Natural killer cell (primary cell): ENCODE measurements at regions of chr7 and their contacts with region 1.

Region 1: DNA sequence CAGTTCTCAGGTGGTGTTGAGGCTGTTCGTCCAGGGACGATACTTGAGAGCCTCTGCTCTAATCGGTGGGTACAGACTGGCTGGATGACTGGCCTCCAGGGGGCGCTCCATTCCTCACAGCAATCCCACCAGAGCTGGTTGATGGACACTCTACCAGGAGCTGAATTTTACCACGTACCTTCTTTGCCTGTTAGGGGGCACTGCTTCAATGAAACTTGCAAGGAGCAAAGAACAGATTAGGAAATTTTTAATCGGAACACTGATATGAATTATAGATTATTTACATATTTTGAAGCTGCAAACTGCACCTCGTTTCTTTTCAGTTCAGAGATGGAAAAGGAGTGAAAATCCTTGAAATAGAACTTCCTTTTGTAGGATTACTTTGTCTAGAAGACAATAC is 44.9 kb downstream of the KBTBD2 start:
- DNase-seq: peak; percentile 86 to 94
- ATAC-seq: peak; percentile 100
- H3K4me3 ChIP-seq: no peak overlapping the region
- H3K4me3 Mint-ChIP-seq: no peak overlapping the region
- H3K27ac ChIP-seq: no peak overlapping the region
- H3K27ac Mint-ChIP-seq: peak overlapping the region in 1 of 2 donors; percentile 44
- H3K4me1 ChIP-seq: peaks cover 4% of the 10 kb centered on the region
- H3K4me1 Mint-ChIP-seq: peaks cover 7 to 8% of the 10 kb centered on the region in 2 donors
- H3K27me3 ChIP-seq: peaks cover 2% of the 10 kb centered on the region
- H3K27me3 Mint-ChIP-seq: peaks cover 16 to 27% of the 10 kb centered on the region in 2 donors
- CTCF ChIP-seq: peak; percentile 87

Region 2: DNA sequence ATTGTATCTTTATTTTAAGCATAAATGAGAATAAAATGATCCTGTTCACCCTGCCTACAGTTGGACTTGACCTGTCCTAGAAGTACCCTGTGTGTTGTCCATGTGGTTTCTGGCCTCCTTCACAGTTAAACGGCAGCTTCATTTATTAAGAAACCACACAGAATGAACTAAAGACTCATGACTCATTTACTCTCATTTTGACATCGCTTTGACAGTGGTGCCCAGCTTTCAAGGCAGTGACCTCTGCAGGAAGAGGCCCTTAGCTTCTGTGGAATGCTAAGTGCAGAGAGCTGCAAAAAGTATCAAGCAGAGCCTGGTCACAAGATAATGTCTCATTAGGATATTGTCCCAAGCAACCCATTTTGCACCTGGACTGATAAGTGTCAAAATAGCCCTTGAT is 258.0 kb before region 1 on chr7:
- intact Hi-C with region 1: no loop called
- DNase-seq: no peak
- ATAC-seq: no peak
- H3K4me3 ChIP-seq: no peak overlapping the region
- H3K4me3 Mint-ChIP-seq: no peak overlapping the region
- H3K27ac ChIP-seq: no peak overlapping the region
- H3K27ac Mint-ChIP-seq: peak overlapping the region; percentile 50 to 54
- H3K4me1 ChIP-seq: no peaks in the 10 kb centered on the region
- H3K4me1 Mint-ChIP-seq: no peaks in the 10 kb centered on the region
- H3K27me3 ChIP-seq: no peaks in the 10 kb centered on the region
- H3K27me3 Mint-ChIP-seq: peaks cover 0 to under 1% of the 10 kb centered on the region in 2 donors
- CTCF ChIP-seq: no peak

Region 3: GRCh38 chr7:32761451-32762205 is 85.1 kb before region 1 on chr7:
- intact Hi-C with region 1: no loop called
- DNase-seq: no peak
- ATAC-seq: no peak
- H3K4me3 ChIP-seq: no peak overlapping the region
- H3K4me3 Mint-ChIP-seq: no peak overlapping the region
- H3K27ac ChIP-seq: no peak overlapping the region
- H3K27ac Mint-ChIP-seq: no peak overlapping the region
- H3K4me1 ChIP-seq: peaks cover 6% of the 10 kb centered on the region
- H3K4me1 Mint-ChIP-seq: peaks cover 9 to 11% of the 10 kb centered on the region in 2 donors
- H3K27me3 ChIP-seq: peaks cover 25% of the 10 kb centered on the region
- H3K27me3 Mint-ChIP-seq: peaks cover 26 to 61% of the 10 kb centered on the region in 2 donors
- CTCF ChIP-seq: no peak

Region 4: GRCh38 chr7:32942786-32943653 is 96.3 kb after region 1 on chr7:
- intact Hi-C with region 1: loop called (anchors 1 kb)
- DNase-seq: peak; percentile 61 to 82
- ATAC-seq: peak; percentile 90 to 92 (median 92)
- H3K4me3 ChIP-seq: peak overlapping the region; percentile 66
- H3K4me3 Mint-ChIP-seq: peak overlapping the region; percentile 97
- H3K27ac ChIP-seq: peak overlapping the region; percentile 57
- H3K27ac Mint-ChIP-seq: peak overlapping the region in 1 of 2 donors; percentile 78
- H3K4me1 ChIP-seq: peaks cover 11% of the 10 kb centered on the region
- H3K4me1 Mint-ChIP-seq: peaks cover 11 to 16% of the 10 kb centered on the region in 2 donors
- H3K27me3 ChIP-seq: no peaks in the 10 kb centered on the region
- H3K27me3 Mint-ChIP-seq: peaks cover under 1 to 12% of the 10 kb centered on the region in 2 donors
- CTCF ChIP-seq: peak; percentile 61

Region 5: DNA sequence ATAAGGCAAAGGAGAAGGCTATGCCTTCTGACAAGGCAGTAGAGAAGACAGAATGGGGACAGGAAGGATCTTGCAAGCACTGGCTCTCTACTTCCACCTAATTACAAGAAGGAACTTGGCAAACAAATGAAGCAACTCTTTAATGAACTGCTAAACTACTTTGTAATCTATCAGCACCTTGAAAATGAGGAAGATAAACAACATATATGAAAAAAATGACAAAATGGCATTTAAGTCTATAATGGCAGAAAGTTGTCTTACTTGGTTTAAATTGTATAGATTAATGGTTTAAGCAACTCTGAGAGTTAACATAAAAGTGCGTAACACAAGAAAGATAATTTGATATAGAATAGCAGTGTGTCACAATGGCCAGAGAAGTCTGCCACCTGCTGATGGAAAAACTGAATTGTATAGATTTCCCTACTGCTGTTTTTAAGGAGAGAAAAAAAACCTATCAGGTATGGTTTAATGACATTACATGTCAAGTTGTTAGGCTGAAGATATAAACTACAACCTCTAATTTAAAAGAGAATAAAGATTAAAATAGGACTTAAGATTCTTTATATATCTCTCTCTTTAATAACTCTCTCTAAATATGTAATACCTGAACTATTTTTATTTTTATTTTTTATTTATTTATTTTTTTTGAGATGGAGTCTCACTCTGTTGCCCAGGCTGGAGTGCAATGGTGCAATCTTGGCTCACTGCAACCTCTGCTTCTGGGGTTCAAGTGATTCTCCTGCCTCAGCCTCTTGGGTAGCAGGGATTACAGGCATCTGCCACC is 204.0 kb after region 1 on chr7:
- intact Hi-C with region 1: loop called (anchors 1 kb)
- DNase-seq: peak in 1 of 2 donors; percentile 77
- ATAC-seq: peak; percentile 52 to 68 (median 57)
- H3K4me3 ChIP-seq: no peak overlapping the region
- H3K4me3 Mint-ChIP-seq: no peak overlapping the region
- H3K27ac ChIP-seq: peak overlapping the region; percentile 41
- H3K27ac Mint-ChIP-seq: peak overlapping the region; percentile 46 to 83
- H3K4me1 ChIP-seq: peaks cover 14% of the 10 kb centered on the region
- H3K4me1 Mint-ChIP-seq: peaks cover 31 to 35% of the 10 kb centered on the region in 2 donors
- H3K27me3 ChIP-seq: no peaks in the 10 kb centered on the region
- H3K27me3 Mint-ChIP-seq: no peaks in the 10 kb centered on the region
- CTCF ChIP-seq: peak; percentile 74

Region 6: GRCh38 chr7:33109005-33109757 is 262.5 kb after region 1 on chr7 and contains the start of gene RP9:
- intact Hi-C with region 1: loop called (anchors 2 kb)
- DNase-seq: peak; percentile 74 to 87
- ATAC-seq: peak; percentile 89 to 96 (median 94)
- H3K4me3 ChIP-seq: peak within 1 kb of the TSS; percentile 59
- H3K4me3 Mint-ChIP-seq: peak within 1 kb of the TSS; percentile 91
- H3K27ac ChIP-seq: peak within 1 kb of the TSS; percentile 51
- H3K27ac Mint-ChIP-seq: peak within 1 kb of the TSS; percentile 79 to 80
- H3K4me1 ChIP-seq: peaks cover 22% of the 10 kb centered on the region
- H3K4me1 Mint-ChIP-seq: peaks cover 34 to 39% of the 10 kb centered on the region in 2 donors
- H3K27me3 ChIP-seq: no peaks in the 10 kb centered on the region
- H3K27me3 Mint-ChIP-seq: peaks cover 23 to 30% of the 10 kb centered on the region in 2 donors
- CTCF ChIP-seq: peak; percentile 52
- total RNA-seq, gene RP9: 19.1 to 27.6 (median 21.9) TPM